Gastrocnemius medialis (tissue), 4 donors: ENCODE measurements at regions of chr2 and their contacts with region 1.

Region 1: GRCh38 chr2:230712443-230713330 is at the start of gene CAB39:
- DNase-seq: peak; percentile 69 to 83
- ATAC-seq: peak; percentile 81 to 84
- H3K4me3 ChIP-seq: peak within 1 kb of the TSS; percentile 80 to 91 (median 87)
- H3K27ac ChIP-seq: peak within 1 kb of the TSS; percentile 81 to 98 (median 93)
- H3K4me1 ChIP-seq: peaks cover 31 to 35% of the 10 kb centered on the region in 2 donors
- H3K27me3 ChIP-seq: no peaks in the 10 kb centered on the region
- CTCF ChIP-seq: peak; percentile 74 to 94 (median 92)
- POLR2A ChIP-seq: peak; percentile 93 to 95
- total RNA-seq, gene CAB39: 93.9 to 211 (median 133) TPM

Region 2: DNA sequence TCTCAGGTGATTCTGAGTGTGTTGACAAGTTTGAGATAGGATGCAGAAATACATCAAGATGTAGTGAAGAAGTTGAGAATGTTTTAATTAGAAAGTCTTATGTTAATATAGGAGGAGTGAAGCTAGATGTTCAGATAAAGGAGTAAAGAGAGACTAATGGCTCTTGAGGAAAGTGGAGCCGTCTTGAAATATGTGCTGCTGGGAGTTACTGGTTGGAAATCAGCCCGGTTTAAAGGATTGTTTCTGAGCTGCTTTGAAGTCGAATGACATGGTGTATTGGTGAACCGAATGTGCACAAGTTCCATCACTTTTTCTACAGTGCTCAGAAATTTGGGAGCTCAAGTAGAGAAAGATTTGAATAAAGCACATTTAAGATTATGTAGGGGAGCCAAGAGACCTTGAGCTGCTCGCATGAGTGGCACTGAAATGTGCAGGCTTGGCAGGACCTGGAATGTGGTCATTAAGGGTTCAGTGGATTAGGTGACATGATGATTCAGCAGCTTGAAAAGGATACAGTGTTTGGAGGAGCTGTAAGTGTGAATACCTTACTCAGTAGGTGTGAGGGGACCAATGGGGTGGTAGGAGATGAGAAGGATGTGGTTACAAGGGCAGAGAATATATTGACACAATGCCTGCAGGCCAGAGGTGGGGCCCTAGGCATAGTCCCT is 68.6 kb after region 1 on chr2:
- in situ Hi-C with region 1: loop called in 2 of 4 experiments (anchors 5 to 10 kb)
- intact Hi-C with region 1: no loop called
- DNase-seq: peak; percentile 58 to 76
- ATAC-seq: peak; percentile 92 to 95
- H3K4me3 ChIP-seq: no peak overlapping the region
- H3K27ac ChIP-seq: peak overlapping the region; percentile 67 to 84 (median 81)
- H3K4me1 ChIP-seq: peaks cover 65 to 83% of the 10 kb centered on the region in 2 donors
- H3K27me3 ChIP-seq: no peaks in the 10 kb centered on the region
- CTCF ChIP-seq: no peak
- POLR2A ChIP-seq: no peak

Region 3: GRCh38 chr2:230793572-230794359 is 81.1 kb after region 1 on chr2:
- in situ Hi-C with region 1: loop called (anchors 5 to 10 kb)
- intact Hi-C with region 1: no loop called
- DNase-seq: peak; percentile 75 to 79
- ATAC-seq: peak; percentile 89 to 94
- H3K4me3 ChIP-seq: no peak overlapping the region
- H3K27ac ChIP-seq: peak overlapping the region; percentile 67 to 79 (median 72)
- H3K4me1 ChIP-seq: peaks cover 65 to 84% of the 10 kb centered on the region in 2 donors
- H3K27me3 ChIP-seq: no peaks in the 10 kb centered on the region
- CTCF ChIP-seq: no peak
- POLR2A ChIP-seq: no peak

Region 4: DNA sequence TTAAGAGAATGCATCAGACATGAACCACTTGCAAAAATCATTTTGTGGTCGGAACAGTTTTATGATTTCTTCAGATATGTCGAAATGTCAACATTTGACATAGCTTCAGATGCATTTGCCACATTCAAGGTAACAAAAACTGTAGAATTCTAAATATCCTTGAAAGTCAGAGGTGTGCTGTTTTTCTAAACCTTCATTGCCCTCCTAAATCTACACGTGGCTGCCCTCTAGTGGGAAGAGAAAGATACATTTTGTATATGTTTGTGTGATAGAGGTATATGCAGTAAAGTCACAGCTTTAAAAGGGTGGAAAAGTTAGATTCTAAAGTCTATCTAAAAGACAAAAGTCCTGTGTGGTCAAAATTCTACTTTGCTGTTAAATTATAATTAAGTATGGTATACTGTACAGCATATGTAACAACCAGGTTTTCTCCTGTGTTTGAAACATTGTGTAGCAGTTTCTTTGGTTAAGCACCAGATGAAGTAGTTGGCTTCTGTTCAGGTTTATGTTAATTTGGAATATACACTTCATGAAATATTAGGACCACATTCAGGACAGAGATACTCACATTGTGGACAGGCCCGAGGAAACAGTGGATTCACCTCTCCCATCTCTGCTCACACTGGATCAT is 86.2 kb after region 1 on chr2:
- in situ Hi-C with region 1: loop called in 2 of 4 experiments (anchors 5 to 10 kb)
- intact Hi-C with region 1: loop called (anchors 1 kb)
- DNase-seq: no peak
- ATAC-seq: peak in 1 of 2 donors; percentile 27
- H3K4me3 ChIP-seq: no peak overlapping the region
- H3K27ac ChIP-seq: peak overlapping the region in 3 of 4 donors; percentile 67 to 79 (median 68)
- H3K4me1 ChIP-seq: peaks cover 41 to 52% of the 10 kb centered on the region in 2 donors
- H3K27me3 ChIP-seq: no peaks in the 10 kb centered on the region
- CTCF ChIP-seq: peak; percentile 38 to 76 (median 65)
- POLR2A ChIP-seq: no peak

Region 5: DNA sequence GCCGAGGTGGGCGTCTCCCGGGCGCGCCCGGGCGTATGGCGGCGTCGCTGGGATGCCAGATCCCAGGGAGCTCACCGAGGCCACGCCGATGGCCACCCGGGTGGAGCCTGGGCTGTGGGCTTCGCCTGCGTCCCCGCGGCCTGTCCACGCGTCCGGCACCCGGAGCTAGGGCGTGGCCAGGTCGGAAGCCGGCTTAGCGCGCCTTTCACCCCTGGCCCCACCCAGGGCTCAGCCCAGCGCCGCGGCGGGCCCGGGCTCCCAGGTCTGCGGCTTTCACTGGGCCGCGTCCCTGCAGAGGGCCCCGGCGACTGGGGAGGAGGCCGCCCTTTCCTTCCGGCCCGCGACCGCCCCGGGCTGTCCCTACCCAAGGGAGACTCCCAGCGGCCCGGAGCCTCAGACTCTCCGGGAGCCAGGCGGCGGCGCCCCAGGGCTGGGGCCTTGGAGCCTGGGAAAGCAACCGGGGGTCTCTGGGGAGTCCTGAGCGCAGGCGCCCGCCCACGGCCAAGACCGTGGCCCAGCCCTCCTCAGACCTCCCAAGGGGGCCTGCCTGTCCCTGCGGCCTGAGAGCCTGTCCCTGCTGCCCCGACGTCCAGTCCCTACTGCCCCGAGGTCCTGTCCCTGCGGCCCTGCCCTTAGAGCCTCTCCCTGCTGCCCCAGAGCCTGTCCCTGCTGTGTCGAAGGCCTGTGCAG is 115.7 kb after region 1 on chr2:
- in situ Hi-C with region 1: no loop called
- intact Hi-C with region 1: no loop called
- DNase-seq: peak; percentile 24 to 33
- ATAC-seq: no peak
- H3K4me3 ChIP-seq: peak overlapping the region in 3 of 4 donors; percentile 6 to 41 (median 37)
- H3K27ac ChIP-seq: peak overlapping the region in 1 of 4 donors; percentile 8
- H3K4me1 ChIP-seq: peaks cover 0 to 3% of the 10 kb centered on the region in 2 donors
- H3K27me3 ChIP-seq: peaks cover 17 to 21% (median 21%) of the 10 kb centered on the region in 3 donors
- CTCF ChIP-seq: no peak
- POLR2A ChIP-seq: no peak

Region 6: DNA sequence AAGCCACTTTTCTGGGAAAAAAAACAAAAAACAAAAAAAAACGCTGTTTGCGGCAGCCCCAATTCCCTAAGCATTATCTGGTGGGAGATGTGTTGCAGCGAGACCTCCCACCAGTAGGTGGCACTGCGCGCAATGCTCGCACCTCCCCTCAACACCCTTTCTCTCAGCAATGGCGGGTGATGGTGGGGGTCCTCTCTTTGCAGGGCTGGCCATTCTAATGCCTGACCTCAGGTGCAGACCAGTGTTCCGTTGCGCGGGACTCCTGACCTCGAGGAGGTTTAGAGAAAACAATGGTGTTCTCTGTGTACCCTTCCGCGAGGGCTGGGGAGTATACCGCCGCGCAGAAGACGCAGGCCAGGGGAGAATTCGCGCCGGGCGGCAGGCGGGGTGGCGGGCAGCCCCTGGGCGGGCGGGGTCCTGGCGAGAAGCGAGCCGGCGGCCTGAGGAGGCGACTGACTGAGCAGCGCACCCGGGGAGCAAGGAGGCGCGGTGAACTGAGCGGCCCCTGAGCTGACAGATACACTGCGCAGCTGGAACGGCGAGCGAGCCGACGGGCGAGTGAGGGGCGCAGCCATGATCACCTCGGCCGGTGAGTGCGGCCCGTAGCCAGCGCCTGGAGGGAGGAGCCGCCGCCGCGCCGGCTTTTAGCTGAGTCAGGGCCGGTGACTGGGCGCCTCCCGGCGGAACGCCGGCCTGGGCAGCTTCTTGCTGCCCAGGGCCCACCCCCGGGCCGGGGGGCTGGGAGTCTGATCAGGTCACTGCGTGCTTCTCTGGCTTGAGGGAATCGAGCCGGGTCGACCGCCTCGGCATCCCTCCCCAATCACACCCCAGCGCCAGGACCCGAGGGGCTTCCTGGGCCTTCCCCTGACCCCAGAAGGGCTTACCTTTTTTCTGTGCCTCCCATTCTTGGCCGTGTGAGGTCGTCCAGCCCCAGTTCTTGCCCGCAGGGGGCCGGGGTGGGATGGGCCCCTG is 344.1 kb after region 1 on chr2 and contains the start of gene PSMD1:
- in situ Hi-C with region 1: no loop called
- intact Hi-C with region 1: no loop called
- DNase-seq: peak; percentile 86 to 90
- ATAC-seq: peak; percentile 91 to 92
- H3K4me3 ChIP-seq: peak within 1 kb of the TSS; percentile 94 to 98 (median 96)
- H3K27ac ChIP-seq: peak within 1 kb of the TSS; percentile 93 to 96 (median 94)
- H3K4me1 ChIP-seq: peaks cover 41 to 49% of the 10 kb centered on the region in 2 donors
- H3K27me3 ChIP-seq: no peaks in the 10 kb centered on the region
- CTCF ChIP-seq: peak; percentile 88 to 96 (median 95)
- POLR2A ChIP-seq: peak; percentile 68 to 70
- total RNA-seq, gene PSMD1: 169 to 189 (median 182) TPM